GM18951 (cell line): ENCODE measurements at regions of chr1 and their contacts with region 1.

Region 1: GRCh38 chr1:119286587-119287181 is 81.9 kb upstream of the HAO2 start:
- POLR2A ChIP-seq: no peak

Region 2: DNA sequence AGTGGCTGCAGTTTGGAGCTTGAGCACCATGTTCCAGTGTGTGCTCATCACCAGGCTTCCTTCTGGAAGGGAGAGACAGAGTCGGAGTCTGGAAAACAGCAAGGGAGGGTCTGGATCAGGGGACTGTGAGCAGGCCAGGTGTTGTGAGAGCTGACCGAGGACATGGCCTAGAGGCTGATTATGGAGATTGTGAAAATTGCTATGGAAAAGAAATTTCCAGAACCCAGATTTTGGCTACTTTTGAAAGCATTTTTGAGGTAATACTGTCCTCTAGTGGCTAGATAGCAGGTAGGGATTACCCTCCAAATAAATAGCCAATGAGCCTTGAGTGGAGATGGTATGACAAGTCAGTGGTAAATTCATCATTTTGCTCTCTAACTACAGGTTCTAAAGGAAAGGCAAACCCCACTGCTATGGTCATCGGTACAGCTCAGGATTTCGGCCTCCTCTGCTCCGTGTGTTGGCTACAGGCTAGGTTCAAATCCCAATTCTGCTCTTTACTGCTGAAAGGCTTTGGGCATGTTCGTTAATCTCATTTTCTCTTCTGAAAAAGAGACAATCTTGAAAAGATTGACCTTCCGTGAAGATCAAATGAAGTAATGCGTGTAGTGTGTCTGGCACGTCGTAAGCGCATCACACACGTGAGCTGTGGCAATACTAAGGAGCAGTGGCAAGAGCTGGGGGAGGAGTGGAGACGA is 80.9 kb after region 1 on chr1:
- in situ Hi-C with region 1: loop called (anchors 10 kb)
- POLR2A ChIP-seq: no peak